ENCODE measurements at regions of chr7 and their contacts with region 1.

Region 1: GRCh38 chr7:47088329-47089067 is 493.4 kb downstream of the TNS3 start:
- DNase-seq: peak; percentile 57 to 78
- ATAC-seq: peak; percentile 89
- H3K4me3 ChIP-seq: no peak overlapping the region
- H3K27ac ChIP-seq: no peak overlapping the region
- H3K4me1 ChIP-seq: no peaks in the 10 kb centered on the region
- H3K27me3 ChIP-seq: no peaks in the 10 kb centered on the region

Region 2: DNA sequence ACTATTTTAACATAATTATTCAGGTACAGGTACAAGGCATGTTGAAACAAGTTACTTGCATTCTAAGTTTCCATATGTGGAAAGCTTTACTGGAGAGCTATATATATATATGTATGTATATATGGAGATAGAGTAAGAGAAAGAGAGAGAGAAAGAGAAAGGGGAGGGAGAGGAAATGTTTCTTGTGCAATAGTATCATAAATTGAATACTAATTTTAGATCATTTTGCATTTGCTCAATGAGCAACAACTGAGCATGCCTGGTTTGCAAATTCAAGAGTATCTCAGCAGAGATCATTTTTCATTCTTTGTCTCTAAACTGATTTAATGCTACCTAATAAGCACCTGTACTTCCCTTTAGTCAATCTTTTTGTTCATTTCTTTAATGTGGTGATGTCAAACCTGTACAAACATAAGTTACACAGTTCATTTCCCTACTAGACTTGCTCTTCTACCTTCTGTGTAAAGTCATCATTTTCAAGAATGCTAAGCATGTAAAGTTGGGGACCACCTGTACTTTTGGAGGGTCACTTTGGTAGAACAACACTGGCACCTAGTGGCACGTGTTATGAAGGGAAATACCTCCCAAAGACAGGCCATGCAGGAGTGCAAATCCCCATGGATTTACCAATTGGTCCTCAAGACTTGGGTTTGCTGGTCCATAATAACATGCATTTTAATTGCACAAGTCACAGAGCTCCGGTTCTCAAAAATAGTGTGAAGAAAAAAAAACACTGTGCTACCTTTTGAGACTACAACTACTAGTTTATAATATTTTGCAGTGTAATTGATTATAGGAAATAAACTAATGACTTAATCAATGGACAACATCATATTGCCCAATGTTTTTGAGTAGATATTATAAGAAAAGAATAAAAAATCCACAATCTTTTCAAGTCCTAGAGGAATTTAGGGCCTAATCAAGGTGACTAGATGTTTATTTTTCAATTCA is 736.2 kb before region 1 on chr7:
- intact Hi-C with region 1: loop called in 1 of 2 experiments (anchors 5 kb)
- DNase-seq: no peak
- ATAC-seq: peak; percentile 56
- H3K4me3 ChIP-seq: no peak overlapping the region
- H3K27ac ChIP-seq: no peak overlapping the region
- H3K4me1 ChIP-seq: no peaks in the 10 kb centered on the region
- H3K27me3 ChIP-seq: no peaks in the 10 kb centered on the region

Region 3: DNA sequence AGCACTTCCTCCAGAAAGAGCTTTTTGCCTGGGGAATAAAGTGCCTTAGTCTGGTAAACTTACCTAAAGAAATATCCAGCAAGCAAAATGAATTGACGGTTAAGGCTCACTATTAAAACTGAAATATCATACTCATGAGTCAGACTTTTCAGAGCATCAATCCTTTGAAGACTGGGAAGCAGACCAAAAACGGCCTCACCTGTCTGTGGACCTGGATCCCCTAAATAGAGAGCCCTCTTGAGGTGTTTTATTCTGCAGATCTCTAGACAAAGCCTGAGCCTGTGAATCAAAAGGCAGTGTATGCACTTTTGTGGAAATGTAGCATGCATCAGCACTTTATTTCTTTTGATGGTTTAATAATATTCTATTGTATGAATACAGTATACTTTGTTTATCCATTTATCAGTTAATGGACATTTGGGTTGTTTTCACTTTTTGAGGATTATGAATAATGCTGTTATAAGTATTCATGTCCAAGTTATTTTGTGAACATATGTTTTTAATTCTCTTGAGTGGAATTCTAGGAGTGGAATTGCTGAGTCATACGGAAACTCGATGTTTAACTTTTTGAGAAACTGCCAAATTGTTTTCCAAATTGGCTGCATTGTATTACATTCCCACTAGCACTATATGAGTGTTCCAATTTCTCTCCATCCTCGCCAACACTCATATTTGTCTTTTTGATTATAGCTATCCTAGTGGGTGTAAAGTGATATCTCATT is 718.4 kb before region 1 on chr7:
- intact Hi-C with region 1: loop called in 1 of 2 experiments (anchors 10 kb)
- DNase-seq: no peak
- ATAC-seq: peak; percentile 76
- H3K4me3 ChIP-seq: no peak overlapping the region
- H3K27ac ChIP-seq: no peak overlapping the region
- H3K4me1 ChIP-seq: peaks cover 0 to 3% of the 10 kb centered on the region in 2 donors
- H3K27me3 ChIP-seq: no peaks in the 10 kb centered on the region

Region 4: DNA sequence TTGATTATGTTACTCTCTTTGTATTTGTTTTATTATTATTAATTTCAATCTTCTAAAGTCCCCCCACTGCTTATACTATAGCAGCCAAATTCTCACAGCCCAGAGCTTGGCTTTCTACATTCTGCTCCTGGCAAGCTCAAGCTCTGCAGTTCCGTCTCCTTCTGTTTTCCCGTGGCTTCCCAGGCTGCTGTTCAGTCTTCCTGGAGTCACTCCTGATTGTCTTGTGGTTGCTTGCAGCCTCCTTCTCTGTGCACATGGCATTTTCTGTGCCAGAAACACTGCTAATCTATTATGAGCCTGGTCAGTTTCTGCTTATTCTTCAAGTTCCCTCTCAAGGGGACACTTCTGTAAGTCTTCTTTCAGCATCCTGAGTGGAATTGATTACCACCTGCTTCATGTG is 633.7 kb before region 1 on chr7:
- intact Hi-C with region 1: loop called in 1 of 2 experiments (anchors 10 kb)
- DNase-seq: no peak
- ATAC-seq: no peak
- H3K4me3 ChIP-seq: no peak overlapping the region
- H3K27ac ChIP-seq: no peak overlapping the region
- H3K4me1 ChIP-seq: peaks cover 0 to 4% of the 10 kb centered on the region in 2 donors
- H3K27me3 ChIP-seq: no peaks in the 10 kb centered on the region

Region 5: DNA sequence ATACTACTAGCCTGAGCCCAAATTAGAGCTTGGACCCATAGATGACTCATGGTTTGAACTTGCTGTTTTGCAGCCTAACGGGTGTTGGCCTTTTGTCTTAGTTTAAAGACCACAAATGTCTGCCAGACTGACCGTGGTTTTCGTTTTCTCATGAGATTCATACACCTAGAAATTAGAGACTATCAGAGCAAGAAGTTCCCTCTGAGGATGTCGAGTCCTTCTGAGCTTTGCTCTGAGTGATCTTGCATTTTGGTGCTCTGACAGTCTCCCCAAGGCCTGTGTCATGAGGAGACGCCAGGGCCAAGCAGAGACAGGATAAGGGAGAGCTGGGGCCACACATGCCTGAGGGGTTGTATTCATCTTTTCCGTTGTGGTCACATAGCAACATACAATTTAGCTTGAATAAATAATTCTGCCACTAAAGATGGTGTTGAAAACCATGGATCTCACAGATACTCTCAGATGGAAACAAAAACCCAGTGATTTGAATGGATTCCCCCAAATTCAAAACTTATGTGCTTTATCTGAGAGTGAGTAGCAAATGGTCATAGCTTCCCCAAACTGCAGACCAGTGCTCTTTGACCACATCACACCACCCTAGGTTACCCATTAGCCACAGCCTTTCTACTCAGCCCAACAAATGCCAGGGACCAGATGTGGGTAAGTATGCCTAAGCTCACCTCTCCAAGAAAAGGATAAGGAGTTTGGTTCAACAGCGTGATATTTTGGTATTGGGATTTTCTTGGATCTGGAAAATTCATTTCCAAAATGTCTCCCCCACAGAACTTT is 405.5 kb before region 1 on chr7:
- intact Hi-C with region 1: loop called in 1 of 2 experiments (anchors 10 kb)
- DNase-seq: no peak
- ATAC-seq: peak; percentile 26
- H3K4me3 ChIP-seq: no peak overlapping the region
- H3K27ac ChIP-seq: no peak overlapping the region
- H3K4me1 ChIP-seq: peaks cover 0 to 4% of the 10 kb centered on the region in 2 donors
- H3K27me3 ChIP-seq: no peaks in the 10 kb centered on the region

Region 6: GRCh38 chr7:47179812-47180515 is 91.5 kb after region 1 on chr7:
- intact Hi-C with region 1: loop called in 1 of 2 experiments (anchors 10 kb)
- DNase-seq: no peak
- ATAC-seq: peak; percentile 76
- H3K4me3 ChIP-seq: no peak overlapping the region
- H3K27ac ChIP-seq: no peak overlapping the region
- H3K4me1 ChIP-seq: peaks cover 0 to 6% of the 10 kb centered on the region in 2 donors
- H3K27me3 ChIP-seq: no peaks in the 10 kb centered on the region

Region 7: DNA sequence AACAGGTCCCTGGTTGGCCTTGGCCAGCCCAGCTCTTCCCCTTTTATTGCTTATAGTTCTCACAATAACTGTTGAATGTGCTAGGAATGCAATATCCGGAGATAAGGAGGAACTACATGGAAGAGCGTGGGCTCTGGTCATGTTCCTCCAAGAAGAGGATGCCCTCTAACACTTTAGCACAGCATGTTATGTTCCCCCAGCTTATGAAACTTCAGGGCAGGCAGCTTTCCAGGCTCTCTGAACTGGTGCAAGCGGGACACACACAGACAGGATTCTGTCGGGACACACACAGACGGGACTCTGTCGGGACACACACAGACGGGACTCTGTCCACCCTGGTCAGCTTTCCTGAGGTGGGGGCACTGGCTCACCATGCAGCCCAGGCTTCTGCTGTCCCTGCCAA is 718.2 kb after region 1 on chr7:
- intact Hi-C with region 1: no loop called
- DNase-seq: no peak
- ATAC-seq: peak; percentile 50
- H3K4me3 ChIP-seq: no peak overlapping the region
- H3K27ac ChIP-seq: peak overlapping the region in 1 of 2 donors; percentile 14
- H3K4me1 ChIP-seq: no peaks in the 10 kb centered on the region
- H3K27me3 ChIP-seq: no peaks in the 10 kb centered on the region